Left ventricle myocardium inferior (tissue), 1 donor: ENCODE measurements at regions of chr16 and their contacts with region 1.

Region 1: GRCh38 chr16:48609652-48610029 is 339 bp downstream of the N4BP1 start:
- DNase-seq: peak; percentile 74
- H3K4me3 ChIP-seq: peak overlapping the region; percentile 95
- H3K27ac ChIP-seq: peak overlapping the region; percentile 95
- H3K4me1 ChIP-seq: peaks cover 84% of the 10 kb centered on the region
- H3K27me3 ChIP-seq: no peaks in the 10 kb centered on the region
- CTCF ChIP-seq: no peak

Region 2: DNA sequence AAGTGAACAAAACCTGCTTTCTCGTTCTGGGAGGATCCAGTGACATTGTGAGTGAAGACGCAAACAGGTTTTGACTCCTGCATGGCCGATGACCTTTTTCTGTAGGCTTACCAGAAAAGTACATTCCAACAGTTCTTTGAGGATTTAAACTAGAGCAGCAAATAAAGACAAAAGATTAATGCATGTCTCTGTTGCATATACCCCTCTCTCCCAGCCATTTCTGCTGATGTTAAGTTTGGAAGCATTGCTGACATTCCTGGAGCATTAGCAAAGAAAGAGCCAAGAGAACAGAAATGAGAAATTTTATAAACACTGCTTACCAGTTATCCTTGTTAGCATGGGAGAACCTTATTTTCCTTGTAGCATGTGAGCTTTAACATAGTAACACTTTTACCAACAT is 273.7 kb before region 1 on chr16:
- intact Hi-C with region 1: no loop called
- DNase-seq: no peak
- H3K4me3 ChIP-seq: no peak overlapping the region
- H3K27ac ChIP-seq: no peak overlapping the region
- H3K4me1 ChIP-seq: peaks cover 18% of the 10 kb centered on the region
- H3K27me3 ChIP-seq: no peaks in the 10 kb centered on the region
- CTCF ChIP-seq: no peak

Region 3: DNA sequence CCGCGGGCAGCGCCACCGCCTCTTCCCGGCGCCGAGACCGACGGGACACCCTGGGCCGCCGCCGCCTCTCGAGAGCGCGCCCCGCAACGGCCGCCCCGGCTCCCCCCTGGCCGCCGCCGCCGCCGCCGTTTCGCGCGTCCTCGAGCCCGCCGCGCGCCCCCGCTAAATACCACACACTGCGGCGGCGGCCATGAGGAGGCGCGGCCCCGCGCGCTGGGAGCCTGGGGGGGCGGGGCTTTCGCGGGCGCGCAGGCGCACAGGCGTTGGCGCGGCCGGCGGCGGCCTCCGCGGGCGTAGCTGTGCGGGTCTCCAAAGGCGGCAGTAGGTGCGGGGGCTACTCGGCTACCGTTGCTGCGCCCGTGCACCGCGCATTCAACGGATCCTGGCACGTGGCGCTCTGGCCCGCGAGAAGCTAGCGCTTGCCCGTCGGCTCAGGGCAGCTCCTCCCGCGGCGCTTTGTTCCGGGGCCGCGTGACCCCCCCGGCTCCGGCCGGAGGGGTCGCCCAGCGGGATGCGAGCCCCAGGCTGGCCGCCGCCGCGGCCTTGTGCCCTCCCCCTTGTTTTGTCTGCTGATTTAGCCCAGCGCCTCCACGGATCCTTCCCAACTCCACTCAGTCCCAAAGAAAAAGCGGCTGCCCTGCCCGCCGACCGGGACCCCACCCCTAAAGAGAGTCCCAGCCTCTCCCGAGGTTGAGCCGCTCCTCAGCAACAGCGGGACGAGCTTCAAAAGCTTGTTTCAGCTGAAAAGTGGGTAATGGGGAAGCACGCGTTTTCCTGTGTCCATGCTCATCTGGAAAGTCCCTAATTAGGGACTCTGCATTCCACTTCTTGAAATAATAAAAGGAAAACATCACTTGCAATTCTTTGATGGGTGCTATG is 224.1 kb before region 1 on chr16 and contains the start of gene SIAH1:
- intact Hi-C with region 1: loop called (anchors 10 kb)
- DNase-seq: peak; percentile 87
- H3K4me3 ChIP-seq: peak within 1 kb of the TSS; percentile 93
- H3K27ac ChIP-seq: peak within 1 kb of the TSS; percentile 97
- H3K4me1 ChIP-seq: peaks cover 47% of the 10 kb centered on the region
- H3K27me3 ChIP-seq: no peaks in the 10 kb centered on the region
- CTCF ChIP-seq: no peak
- total RNA-seq, gene SIAH1: 11.5 TPM

Region 4: GRCh38 chr16:48409839-48410611 is 199.6 kb before region 1 on chr16:
- intact Hi-C with region 1: no loop called
- DNase-seq: no peak
- H3K4me3 ChIP-seq: no peak overlapping the region
- H3K27ac ChIP-seq: no peak overlapping the region
- H3K4me1 ChIP-seq: peaks cover 6% of the 10 kb centered on the region
- H3K27me3 ChIP-seq: no peaks in the 10 kb centered on the region
- CTCF ChIP-seq: no peak